Activated naive CD4-positive, alpha-beta T cell treated with anti-CD3 and anti-CD28 coated beads, Interleukin-2, amount 10 ng/mL, durations not matched to agents 7 days and 5 days (primary cell): ENCODE measurements at regions of chr1 and their contacts with region 1.

Region 1: DNA sequence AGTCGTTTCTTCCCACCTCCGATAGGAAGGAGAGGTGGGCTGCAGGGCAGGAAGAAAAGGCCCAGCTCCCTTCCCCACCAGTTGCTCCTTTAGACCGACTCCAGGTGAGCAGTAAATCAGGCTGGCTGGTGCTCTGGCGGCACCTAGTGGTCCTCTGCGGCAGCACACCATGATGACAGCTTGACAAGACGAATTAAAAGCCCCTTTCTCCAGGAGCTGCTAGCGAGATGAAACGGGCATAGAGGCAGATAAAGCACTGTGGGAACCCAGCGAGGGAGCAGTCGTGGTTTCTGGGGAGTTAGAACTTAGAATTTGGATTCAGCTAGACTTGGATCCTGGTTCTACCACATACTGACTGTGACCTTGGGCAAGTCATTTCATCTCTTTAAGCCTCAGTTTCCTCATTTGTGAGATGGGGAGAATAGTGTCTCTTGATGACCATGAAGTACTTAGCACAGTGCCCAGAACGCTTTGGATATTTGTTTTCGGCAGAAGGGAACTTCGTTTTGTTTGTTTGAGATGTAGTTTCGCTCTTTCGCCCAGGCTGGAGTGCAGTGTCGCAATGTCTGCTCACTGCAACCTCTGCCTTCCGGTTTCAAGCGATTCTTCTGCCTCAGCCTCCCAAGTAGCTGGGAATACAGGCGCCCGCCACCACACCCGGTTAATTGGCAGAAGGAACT is 21.8 kb upstream of the COL9A2 start:
- DNase-seq: peak; percentile 94
- H3K4me3 Mint-ChIP-seq: no peak overlapping the region
- H3K27ac Mint-ChIP-seq: no peak overlapping the region
- H3K4me1 Mint-ChIP-seq: peaks cover 48% of the 10 kb centered on the region
- H3K27me3 Mint-ChIP-seq: peaks cover 4% of the 10 kb centered on the region

Region 2: DNA sequence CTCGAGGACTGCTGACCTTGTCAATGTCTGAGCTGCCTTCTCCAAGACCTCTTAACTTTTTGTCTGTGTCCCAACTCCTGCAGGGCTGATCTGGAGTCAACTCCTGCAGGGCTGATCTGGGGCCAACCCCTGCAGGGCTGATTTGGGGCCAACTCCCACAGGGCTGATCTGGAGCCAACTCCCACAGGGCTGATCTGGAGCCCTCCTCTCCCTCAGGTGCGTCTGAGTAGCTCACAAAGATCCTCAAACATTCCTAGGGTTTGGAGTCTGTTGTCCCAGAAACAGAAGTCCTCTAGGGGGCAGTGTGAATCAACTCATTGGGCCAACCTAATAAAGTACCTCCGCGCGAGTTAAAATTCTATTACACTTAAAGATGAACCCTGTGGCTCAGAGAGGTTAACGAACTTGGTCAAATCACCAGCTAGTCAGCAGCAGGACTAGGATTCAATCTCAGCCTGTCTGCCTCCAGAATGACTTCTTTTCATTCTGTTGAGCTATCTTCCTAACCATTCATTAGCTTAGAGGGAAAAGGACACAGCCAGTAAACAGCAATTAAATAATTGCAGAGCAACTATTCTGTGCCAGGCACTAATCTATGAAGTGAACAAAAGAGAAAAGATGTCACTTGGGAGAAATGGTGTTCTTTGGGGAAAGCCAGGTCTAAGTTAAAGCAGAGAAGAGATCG is 194.9 kb before region 1 on chr1:
- CTCF ChIA-PET with region 1: interaction called, 215 read pairs
- DNase-seq: peak; percentile 64
- H3K4me3 Mint-ChIP-seq: no peak overlapping the region
- H3K27ac Mint-ChIP-seq: no peak overlapping the region
- H3K4me1 Mint-ChIP-seq: peaks cover 12% of the 10 kb centered on the region
- H3K27me3 Mint-ChIP-seq: peaks cover 34% of the 10 kb centered on the region

Region 3: GRCh38 chr1:40315239-40315794 is 23.6 kb before region 1 on chr1:
- CTCF ChIA-PET with region 1: interaction called, 71 read pairs
- DNase-seq: peak; percentile 86
- H3K4me3 Mint-ChIP-seq: peak overlapping the region; percentile 61
- H3K27ac Mint-ChIP-seq: peak overlapping the region; percentile 28
- H3K4me1 Mint-ChIP-seq: peaks cover 54% of the 10 kb centered on the region
- H3K27me3 Mint-ChIP-seq: peaks cover 72% of the 10 kb centered on the region

Region 4: DNA sequence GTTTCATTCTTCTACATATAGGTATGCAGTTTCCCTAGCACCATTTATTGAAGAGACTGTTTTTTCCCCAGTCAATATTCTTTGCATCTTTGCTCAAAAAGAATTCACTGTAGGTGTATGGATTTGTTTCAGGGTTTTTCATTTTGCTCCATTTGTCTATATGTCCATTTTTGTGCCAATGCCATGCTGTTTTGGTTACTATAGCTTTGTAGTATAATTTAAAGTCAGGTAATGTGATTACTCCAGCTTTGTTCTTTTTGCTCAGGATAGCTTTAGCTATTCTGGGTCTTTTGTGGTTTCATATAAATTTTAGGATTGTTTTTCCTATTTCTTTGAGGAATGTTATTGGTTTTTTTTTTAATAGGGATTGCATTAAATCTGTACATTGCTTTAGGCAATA is 18.7 kb after region 1 on chr1:
- CTCF ChIA-PET with region 1: interaction called, 21 read pairs
- DNase-seq: no peak
- H3K4me3 Mint-ChIP-seq: no peak overlapping the region
- H3K27ac Mint-ChIP-seq: no peak overlapping the region
- H3K4me1 Mint-ChIP-seq: no peaks in the 10 kb centered on the region
- H3K27me3 Mint-ChIP-seq: no peaks in the 10 kb centered on the region

Region 5: GRCh38 chr1:40404670-40405462 is 66.0 kb after region 1 on chr1:
- CTCF ChIA-PET with region 1: interaction called, 54 read pairs
- DNase-seq: peak; percentile 64
- H3K4me3 Mint-ChIP-seq: no peak overlapping the region
- H3K27ac Mint-ChIP-seq: peak overlapping the region; percentile 46
- H3K4me1 Mint-ChIP-seq: peaks cover 49% of the 10 kb centered on the region
- H3K27me3 Mint-ChIP-seq: no peaks in the 10 kb centered on the region